OCI-LY7 (cell line): ENCODE measurements at regions of chrX and their contacts with region 1.

Region 1: DNA sequence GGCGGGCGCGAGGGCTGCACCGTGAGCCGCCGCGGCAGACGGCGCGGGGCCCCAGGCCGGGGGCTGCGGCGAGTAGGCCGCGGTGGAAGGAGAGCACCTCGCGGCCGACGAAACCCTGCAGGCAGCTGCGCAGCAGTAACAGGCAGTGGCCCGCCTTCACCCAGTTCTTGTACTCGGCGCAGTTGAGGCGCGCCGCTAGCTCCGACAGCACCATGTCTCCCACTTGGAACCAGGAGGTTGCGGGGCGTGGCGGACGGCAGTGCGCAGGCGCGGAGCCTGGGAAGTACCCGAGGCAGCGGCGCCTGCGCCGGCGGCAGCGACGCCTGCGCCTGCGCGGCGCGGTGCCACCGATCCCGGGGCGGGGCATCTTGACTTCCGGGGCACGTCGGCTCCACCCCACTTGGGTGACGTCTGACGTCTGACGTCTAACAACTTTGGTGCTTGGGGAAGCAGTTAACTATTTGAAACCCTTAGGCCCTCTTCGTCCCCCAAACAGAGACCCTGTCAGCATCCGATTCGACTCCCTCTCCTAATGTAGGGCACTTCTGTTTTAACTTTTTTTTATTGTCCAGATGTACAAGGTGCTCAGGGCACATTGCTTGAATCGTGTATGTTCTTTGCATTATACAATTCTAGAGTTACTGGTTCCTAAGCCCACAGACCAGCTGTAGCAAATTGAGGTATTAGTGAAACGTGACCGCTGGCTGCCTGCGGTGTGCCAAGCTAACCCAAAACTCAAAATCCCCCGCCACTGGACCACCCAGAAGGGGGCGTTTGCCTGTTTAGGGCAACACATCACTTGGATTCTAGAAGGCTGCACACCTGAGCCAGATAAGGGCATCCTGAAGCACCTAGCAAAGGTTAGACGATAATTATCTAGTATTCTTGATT is at the start of gene CXorf38:
- DNase-seq: peak; percentile 90
- H3K4me3 ChIP-seq: peak within 1 kb of the TSS; percentile 76
- H3K27ac ChIP-seq: peak within 1 kb of the TSS; percentile 58
- H3K4me1 ChIP-seq: peaks cover 26% of the 10 kb centered on the region
- CTCF ChIP-seq: 0 out of 2 replicates have a peak, but pooled peaks have one; percentile 16
- total RNA-seq, gene CXorf38: 12.9 and 13.6 TPM in 2 replicates

Region 2: DNA sequence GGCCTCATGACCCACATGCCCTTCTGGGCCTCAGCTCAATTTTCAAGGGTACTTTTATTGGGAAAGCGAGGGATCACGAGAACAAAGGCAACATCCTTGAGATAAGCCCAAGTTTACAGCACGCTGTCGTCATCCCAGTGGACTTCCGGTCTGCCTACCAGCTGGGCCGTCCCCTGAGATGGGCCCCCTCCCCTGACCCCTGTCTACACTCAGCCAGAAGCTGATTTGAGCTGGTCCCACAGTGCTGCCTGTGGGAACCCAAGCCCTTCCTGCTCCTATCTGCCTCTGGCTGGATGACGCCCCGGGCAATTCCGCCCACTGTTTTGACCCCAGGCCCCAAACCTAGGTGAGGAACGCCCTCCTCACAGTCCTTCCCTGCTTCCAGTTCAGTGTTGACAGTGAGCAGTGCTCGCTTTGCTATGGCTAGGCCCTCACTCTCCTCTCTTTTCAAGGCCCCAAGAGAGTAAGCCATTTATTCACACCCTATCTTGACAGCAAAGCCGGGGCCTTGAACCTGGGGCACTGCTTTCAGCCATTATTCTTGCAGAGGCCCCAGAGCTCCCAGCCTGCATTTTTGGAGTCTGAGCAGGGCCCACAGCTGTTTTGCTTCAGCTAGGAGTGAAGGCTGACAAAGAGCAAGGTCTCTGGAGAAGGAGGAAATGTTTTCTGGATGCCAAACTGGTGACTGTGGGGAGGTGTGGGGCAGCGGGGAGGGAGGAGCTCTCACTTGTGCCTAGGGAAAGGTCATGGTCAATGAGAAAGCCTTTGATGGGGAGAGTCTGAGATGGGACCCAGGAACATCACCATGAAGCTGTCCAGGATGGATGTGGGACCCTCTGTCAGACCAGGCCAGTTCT is 385.2 kb before region 1 on chrX:
- CTCF ChIA-PET with region 1: no interaction called
- POLR2A ChIA-PET with region 1: no interaction called
- intact Hi-C with region 1: no loop called
- DNase-seq: no peak
- H3K4me3 ChIP-seq: no peak overlapping the region
- H3K27ac ChIP-seq: no peak overlapping the region
- H3K4me1 ChIP-seq: peaks cover 13% of the 10 kb centered on the region
- CTCF ChIP-seq: no peak

Region 3: GRCh38 chrX:40539214-40540142 is 108.1 kb before region 1 on chrX:
- CTCF ChIA-PET with region 1: interaction called, 3 read pairs
- POLR2A ChIA-PET with region 1: no interaction called
- intact Hi-C with region 1: loop called (anchors 5 kb)
- DNase-seq: peak; percentile 1
- H3K4me3 ChIP-seq: no peak overlapping the region
- H3K27ac ChIP-seq: no peak overlapping the region
- H3K4me1 ChIP-seq: no peaks in the 10 kb centered on the region
- CTCF ChIP-seq: peak; percentile 43; the same call in 1 of the 2 replicates

Region 4: DNA sequence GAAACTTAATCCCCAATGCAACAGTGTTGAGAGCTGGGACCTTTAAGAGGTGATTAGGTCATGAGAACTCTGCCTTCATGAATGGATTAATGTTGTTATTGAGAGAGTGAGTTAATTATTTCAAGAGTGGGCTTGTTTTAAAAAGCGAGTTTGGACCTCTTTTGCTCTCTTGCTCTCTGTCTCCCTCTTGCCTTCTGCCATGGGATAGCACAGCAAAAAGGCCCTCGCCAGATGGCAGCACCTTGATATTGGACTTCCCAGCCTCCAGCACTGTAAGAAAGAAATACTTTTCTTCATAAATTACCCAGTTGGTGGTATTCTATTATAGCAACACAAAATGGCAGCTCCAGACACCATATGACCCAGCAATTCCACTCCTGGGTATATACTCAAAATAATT is 73.8 kb before region 1 on chrX:
- CTCF ChIA-PET with region 1: no interaction called
- POLR2A ChIA-PET with region 1: no interaction called
- intact Hi-C with region 1: loop called (anchors 2 kb)
- DNase-seq: peak; percentile 45
- H3K4me3 ChIP-seq: no peak overlapping the region
- H3K27ac ChIP-seq: no peak overlapping the region
- H3K4me1 ChIP-seq: no peaks in the 10 kb centered on the region
- CTCF ChIP-seq: peak; percentile 82

Region 5: GRCh38 chrX:40735325-40736169 is 88.0 kb after region 1 on chrX and contains the start of gene MED14:
- CTCF ChIA-PET with region 1: no interaction called
- POLR2A ChIA-PET with region 1: interaction called, 3 read pairs
- intact Hi-C with region 1: loop called (anchors 2 kb)
- DNase-seq: peak; percentile 89
- H3K4me3 ChIP-seq: peak within 1 kb of the TSS; percentile 87
- H3K27ac ChIP-seq: peak within 1 kb of the TSS; percentile 85
- H3K4me1 ChIP-seq: peaks cover 19% of the 10 kb centered on the region
- CTCF ChIP-seq: peak; percentile 52
- total RNA-seq, gene MED14: 28.1 and 39.4 TPM in 2 replicates

Region 6: DNA sequence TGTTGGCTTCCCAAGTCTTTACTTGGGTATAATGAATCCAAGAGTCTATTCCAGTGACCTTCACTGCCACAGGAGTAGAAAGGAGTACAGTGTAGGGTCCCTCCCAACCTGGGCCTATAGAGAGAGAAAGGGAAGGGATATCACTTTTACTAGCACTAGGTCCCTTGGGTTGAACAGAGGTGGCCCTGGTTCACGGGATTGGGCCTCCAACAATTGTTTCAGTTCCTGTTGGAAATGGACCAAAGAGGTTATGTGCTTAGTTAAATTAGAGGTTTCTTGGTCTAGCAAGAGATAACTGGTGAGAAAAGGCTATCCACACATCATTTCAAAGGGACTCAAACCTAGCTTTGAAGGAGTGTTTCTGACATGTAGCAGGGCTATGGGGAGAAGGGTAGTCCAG is 144.9 kb after region 1 on chrX:
- CTCF ChIA-PET with region 1: interaction called, 5 read pairs
- POLR2A ChIA-PET with region 1: no interaction called
- intact Hi-C with region 1: loop called (anchors 1 kb)
- DNase-seq: no peak
- H3K4me3 ChIP-seq: no peak overlapping the region
- H3K27ac ChIP-seq: no peak overlapping the region
- H3K4me1 ChIP-seq: no peaks in the 10 kb centered on the region
- CTCF ChIP-seq: no peak

Region 7: GRCh38 chrX:40855411-40855810 is 207.9 kb after region 1 on chrX:
- CTCF ChIA-PET with region 1: no interaction called
- POLR2A ChIA-PET with region 1: no interaction called
- intact Hi-C with region 1: no loop called
- DNase-seq: no peak
- H3K4me3 ChIP-seq: no peak overlapping the region
- H3K27ac ChIP-seq: no peak overlapping the region
- H3K4me1 ChIP-seq: no peaks in the 10 kb centered on the region
- CTCF ChIP-seq: no peak

Region 8: GRCh38 chrX:40922307-40922706 is 274.8 kb after region 1 on chrX:
- CTCF ChIA-PET with region 1: no interaction called
- POLR2A ChIA-PET with region 1: no interaction called
- intact Hi-C with region 1: loop called (anchors 5 kb)
- DNase-seq: peak; percentile 44
- H3K4me3 ChIP-seq: no peak overlapping the region
- H3K27ac ChIP-seq: no peak overlapping the region
- H3K4me1 ChIP-seq: no peaks in the 10 kb centered on the region
- CTCF ChIP-seq: peak; percentile 62

Region 9: GRCh38 chrX:41084044-41084892 is 436.7 kb after region 1 on chrX:
- CTCF ChIA-PET with region 1: no interaction called
- POLR2A ChIA-PET with region 1: no interaction called
- intact Hi-C with region 1: loop called (anchors 10 kb)
- DNase-seq: peak; percentile 91
- H3K4me3 ChIP-seq: peak overlapping the region; percentile 97
- H3K27ac ChIP-seq: peak overlapping the region; percentile 95
- H3K4me1 ChIP-seq: peaks cover 32% of the 10 kb centered on the region
- CTCF ChIP-seq: no peak